Calu3 (cell line): ENCODE measurements at regions of chr5 and their contacts with region 1.

Region 1: GRCh38 chr5:117590944-117591343 is 1016.3 kb upstream of the SEMA6A start:
- DNase-seq: peak; percentile 17
- H3K4me3 Mint-ChIP-seq: no peak overlapping the region
- H3K27ac Mint-ChIP-seq: no peak overlapping the region
- H3K4me1 Mint-ChIP-seq: no peaks in the 10 kb centered on the region
- H3K27me3 Mint-ChIP-seq: no peaks in the 10 kb centered on the region
- CTCF ChIP-seq: no peak

Region 2: GRCh38 chr5:117761186-117761585 is 170.2 kb after region 1 on chr5:
- CTCF ChIA-PET with region 1: no interaction called
- intact Hi-C with region 1: loop called (anchors 10 kb)
- DNase-seq: no peak
- H3K4me3 Mint-ChIP-seq: no peak overlapping the region
- H3K27ac Mint-ChIP-seq: no peak overlapping the region
- H3K4me1 Mint-ChIP-seq: no peaks in the 10 kb centered on the region
- H3K27me3 Mint-ChIP-seq: no peaks in the 10 kb centered on the region
- CTCF ChIP-seq: no peak

Region 3: GRCh38 chr5:118956727-118957126 is 1365.8 kb after region 1 on chr5:
- CTCF ChIA-PET with region 1: interaction called, 3 read pairs
- intact Hi-C with region 1: loop called (anchors 5 kb)
- DNase-seq: no peak
- H3K4me3 Mint-ChIP-seq: no peak overlapping the region
- H3K27ac Mint-ChIP-seq: no peak overlapping the region
- H3K4me1 Mint-ChIP-seq: no peaks in the 10 kb centered on the region
- H3K27me3 Mint-ChIP-seq: no peaks in the 10 kb centered on the region
- CTCF ChIP-seq: no peak